PC-3 (cell line): ENCODE measurements at regions of chr21 and their contacts with region 1.

Region 1: DNA sequence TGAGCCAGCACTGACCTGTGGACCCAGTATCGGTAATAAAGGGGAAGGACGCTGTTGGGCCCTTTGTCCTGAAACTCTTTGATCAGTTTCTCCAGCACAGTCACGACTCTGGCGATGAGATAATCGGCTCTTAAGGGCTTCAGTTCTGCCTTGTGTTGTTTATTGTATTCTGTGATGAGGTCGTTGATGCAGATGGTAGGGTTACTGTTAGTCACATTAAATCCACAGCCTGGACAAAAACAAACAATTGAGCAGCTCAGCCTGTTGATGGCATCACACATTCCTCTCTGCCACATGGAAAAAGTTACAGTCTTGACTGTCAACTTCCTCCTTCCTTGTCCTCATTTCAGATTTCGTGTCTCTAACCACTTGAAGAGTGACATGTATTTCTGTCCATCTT is 57.6 kb downstream of the SIM2 start:
- DNase-seq: peak; percentile 76
- ATAC-seq: peak; percentile 73
- H3K4me3 ChIP-seq: no peak overlapping the region
- H3K27ac ChIP-seq: peak overlapping the region; percentile 56
- H3K4me1 ChIP-seq: peaks cover 21% of the 10 kb centered on the region
- H3K27me3 ChIP-seq: no peaks in the 10 kb centered on the region
- CTCF ChIP-seq: no peak

Region 2: GRCh38 chr21:36783612-36784383 is 27.3 kb after region 1 on chr21:
- CTCF ChIA-PET with region 1: no interaction called
- POLR2A ChIA-PET with region 1: no interaction called
- intact Hi-C with region 1: loop called (anchors 2 kb)
- DNase-seq: peak; percentile 96
- ATAC-seq: peak; percentile 74
- H3K4me3 ChIP-seq: no peak overlapping the region
- H3K27ac ChIP-seq: peak overlapping the region; percentile 48
- H3K4me1 ChIP-seq: peaks cover 49% of the 10 kb centered on the region
- H3K27me3 ChIP-seq: no peaks in the 10 kb centered on the region
- CTCF ChIP-seq: no peak

Region 3: DNA sequence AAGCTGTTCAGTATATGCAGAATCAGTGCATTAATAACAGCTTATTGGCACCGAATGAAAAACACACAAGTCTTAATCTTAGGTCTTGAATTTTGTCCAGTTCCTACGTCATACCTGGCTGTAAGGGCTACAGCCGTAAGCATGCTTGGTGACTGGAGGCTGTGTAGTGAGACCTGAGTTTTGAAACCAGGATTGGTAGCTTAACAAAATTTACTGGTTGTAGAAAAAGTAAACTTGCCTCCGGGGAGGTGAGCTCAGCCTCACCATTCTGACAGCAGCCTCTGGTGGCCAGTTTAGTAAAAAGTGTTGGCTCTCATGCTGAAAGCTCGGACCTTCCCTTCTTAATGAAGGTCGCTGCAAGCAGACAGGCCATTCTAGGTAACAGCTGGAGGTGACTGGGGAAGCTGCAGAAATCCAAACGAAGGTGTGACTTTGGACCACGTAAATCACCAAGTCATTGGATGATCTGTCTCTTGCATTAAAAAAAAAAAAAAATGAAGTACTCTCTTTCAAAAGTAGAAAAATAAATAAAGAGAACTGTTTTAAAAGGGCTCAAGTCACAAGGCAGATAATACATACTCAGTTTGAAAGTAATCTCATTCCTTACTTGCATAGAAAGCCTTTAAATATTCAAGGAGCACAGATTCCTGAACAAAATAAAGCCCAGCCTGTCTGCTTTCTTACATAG is 161.1 kb after region 1 on chr21:
- CTCF ChIA-PET with region 1: interaction called, 19 read pairs
- POLR2A ChIA-PET with region 1: interaction called, 15 read pairs
- intact Hi-C with region 1: loop called (anchors 2 kb)
- DNase-seq: peak; percentile 87
- ATAC-seq: peak; percentile 85
- H3K4me3 ChIP-seq: no peak overlapping the region
- H3K27ac ChIP-seq: peak overlapping the region; percentile 88
- H3K4me1 ChIP-seq: peaks cover 30% of the 10 kb centered on the region
- H3K27me3 ChIP-seq: no peaks in the 10 kb centered on the region
- CTCF ChIP-seq: peak; percentile 90

Region 4: DNA sequence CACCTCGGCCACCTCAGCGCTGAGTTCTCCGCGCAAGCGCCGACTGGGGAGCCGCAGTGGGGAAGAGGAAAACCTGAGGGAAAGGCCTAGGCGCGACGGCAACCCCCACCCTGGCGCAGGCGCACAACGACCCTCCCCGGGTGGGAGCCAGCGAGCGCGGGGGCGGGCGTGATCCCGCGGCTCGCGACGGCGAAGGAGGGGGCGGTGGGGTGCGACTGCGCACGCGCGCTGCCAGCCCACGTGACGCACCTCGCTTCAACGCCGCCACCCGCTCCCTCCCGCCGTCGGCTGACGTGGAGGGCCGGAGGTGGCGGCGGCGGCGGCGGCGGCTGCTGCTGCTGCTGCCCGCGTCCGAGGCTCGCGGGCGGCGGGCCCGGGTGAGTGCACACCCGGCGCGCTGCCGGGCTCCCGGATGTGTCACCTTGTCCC is 316.5 kb after region 1 on chr21 and contains the starts of genes PIGP and TTC3:
- CTCF ChIA-PET with region 1: no interaction called
- POLR2A ChIA-PET with region 1: no interaction called
- intact Hi-C with region 1: no loop called
- DNase-seq: peak; percentile 96
- ATAC-seq: peak; percentile 74
- H3K4me3 ChIP-seq: peak within 1 kb of the TSS; percentile 84
- H3K27ac ChIP-seq: peak within 1 kb of the TSS; percentile 81
- H3K4me1 ChIP-seq: peaks cover 21% of the 10 kb centered on the region
- H3K27me3 ChIP-seq: no peaks in the 10 kb centered on the region
- CTCF ChIP-seq: no peak
- total RNA-seq, gene PIGP: 17.1 and 20.1 TPM in 2 replicates
- total RNA-seq, gene TTC3: 121 and 140 TPM in 2 replicates